Vagina (tissue), 2 donors: ENCODE measurements at regions of chr3 and their contacts with region 1.

Region 1: DNA sequence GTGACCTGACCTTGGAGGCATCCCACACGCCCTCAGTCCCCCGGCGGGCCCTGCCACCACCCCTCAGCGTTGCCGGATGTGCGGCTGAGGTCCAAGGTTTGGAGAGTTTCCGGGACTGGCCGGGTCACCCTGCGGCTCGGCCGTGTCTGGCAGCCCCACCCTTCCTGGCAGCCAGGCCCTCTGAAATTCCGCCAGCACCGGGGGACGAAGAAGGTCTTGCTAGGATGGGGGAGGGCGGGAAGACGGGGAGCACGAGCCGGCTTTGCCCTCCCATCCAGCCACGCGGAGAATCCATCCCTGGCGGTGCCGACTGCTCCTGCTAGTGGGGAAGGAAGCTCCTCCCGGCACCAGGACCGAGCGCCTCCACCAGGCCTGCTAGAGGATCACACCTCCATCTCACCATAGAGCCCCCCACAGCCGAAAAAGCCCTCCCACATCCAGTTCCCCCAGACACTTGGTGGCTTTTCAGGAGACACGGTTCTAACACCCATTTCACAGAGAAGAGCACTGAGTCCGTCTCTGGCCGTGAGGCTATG is 81.5 kb downstream of the CPN2 start:
- DNase-seq: peak in 1 of 2 donors; percentile 92
- H3K4me3 ChIP-seq: no peak overlapping the region
- H3K27ac ChIP-seq: no peak overlapping the region
- H3K4me1 ChIP-seq: peaks cover 69% of the 10 kb centered on the region
- H3K27me3 ChIP-seq: no peaks in the 10 kb centered on the region
- CTCF ChIP-seq: peak in 1 of 3 experiments; percentile 26
- POLR2A ChIP-seq: no peak

Region 2: GRCh38 chr3:194141415-194142155 is 128.1 kb before region 1 on chr3:
- intact Hi-C with region 1: loop called (anchors 2 kb)
- DNase-seq: peak in 1 of 2 donors; percentile 93
- H3K4me3 ChIP-seq: peak overlapping the region; percentile 37 to 42
- H3K27ac ChIP-seq: peak overlapping the region; percentile 86
- H3K4me1 ChIP-seq: peaks cover 51% of the 10 kb centered on the region
- H3K27me3 ChIP-seq: no peaks in the 10 kb centered on the region
- CTCF ChIP-seq: no peak
- POLR2A ChIP-seq: no peak

Region 3: DNA sequence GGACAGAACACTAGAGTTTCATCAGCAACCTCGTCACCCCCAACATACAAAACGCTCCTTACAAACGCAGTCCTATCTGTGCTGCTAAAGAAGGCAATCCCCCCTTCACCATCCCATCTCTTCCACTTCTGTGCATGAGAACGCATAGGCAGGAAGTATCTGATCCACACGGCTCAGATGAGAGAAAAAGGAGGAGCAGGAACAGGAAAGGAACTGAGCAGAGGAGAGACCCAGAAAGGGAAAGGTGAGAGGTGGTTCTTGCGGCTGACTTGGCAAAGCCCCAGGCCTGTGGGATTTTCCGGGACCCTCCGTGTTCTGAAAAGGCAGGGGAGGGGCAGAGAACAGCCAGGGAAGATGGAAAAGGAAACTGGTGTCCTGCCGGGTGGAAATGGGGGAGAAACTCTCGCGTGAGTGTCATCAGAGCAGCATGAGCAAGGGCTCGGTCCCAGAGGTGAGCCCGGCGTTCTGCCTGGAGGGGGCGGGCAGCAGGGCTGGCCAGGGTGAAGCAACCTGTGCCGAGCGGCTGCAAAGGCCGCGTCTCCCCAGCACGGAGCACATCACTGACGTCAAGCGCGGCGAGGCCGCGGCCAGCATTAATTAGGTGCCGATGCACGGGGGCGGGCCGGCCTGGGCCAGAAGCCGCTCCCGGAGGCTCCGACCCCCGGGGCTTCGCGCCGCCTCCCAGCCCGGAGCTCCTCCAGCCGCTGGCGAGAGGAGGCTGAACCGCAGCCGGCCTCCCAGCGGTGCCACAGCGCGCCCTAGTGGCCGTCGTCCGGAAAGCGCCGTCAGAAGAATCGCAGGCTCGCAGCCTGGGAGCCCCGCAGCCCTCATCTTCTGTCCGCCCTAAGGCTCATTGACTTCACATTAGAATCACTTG is 45.6 kb after region 1 on chr3:
- intact Hi-C with region 1: loop called (anchors 2 kb)
- DNase-seq: peak in 1 of 2 donors; percentile 96
- H3K4me3 ChIP-seq: peak overlapping the region; percentile 41 to 46
- H3K27ac ChIP-seq: peak overlapping the region; percentile 63
- H3K4me1 ChIP-seq: peaks cover 45% of the 10 kb centered on the region
- H3K27me3 ChIP-seq: no peaks in the 10 kb centered on the region
- CTCF ChIP-seq: peak; percentile 48 to 97 (median 90)
- POLR2A ChIP-seq: no peak